CD8-positive, alpha-beta T cell (primary cell): ENCODE measurements at regions of chr5 and their contacts with region 1.

Region 1: GRCh38 chr5:32514806-32515205 is 70.3 kb upstream of the ZFR start:
- DNase-seq: no peak
- ATAC-seq: no peak
- H3K4me3 ChIP-seq: no peak overlapping the region
- H3K4me3 Mint-ChIP-seq: no peak overlapping the region
- H3K27ac ChIP-seq: no peak overlapping the region
- H3K27ac Mint-ChIP-seq: no peak overlapping the region
- H3K4me1 ChIP-seq: no peaks in the 10 kb centered on the region
- H3K4me1 Mint-ChIP-seq: no peaks in the 10 kb centered on the region
- H3K27me3 ChIP-seq: no peaks in the 10 kb centered on the region
- H3K27me3 Mint-ChIP-seq: peaks cover 4% of the 10 kb centered on the region
- CTCF ChIP-seq: no peak

Region 2: GRCh38 chr5:32551865-32552264 is 37.1 kb after region 1 on chr5:
- CTCF ChIA-PET with region 1: no interaction called
- POLR2A ChIA-PET with region 1: no interaction called
- intact Hi-C with region 1: loop called in 1 of 2 experiments (anchors 2 kb)
- DNase-seq: no peak
- ATAC-seq: no peak
- H3K4me3 ChIP-seq: no peak overlapping the region
- H3K4me3 Mint-ChIP-seq: no peak overlapping the region
- H3K27ac ChIP-seq: no peak overlapping the region
- H3K27ac Mint-ChIP-seq: no peak overlapping the region
- H3K4me1 ChIP-seq: no peaks in the 10 kb centered on the region
- H3K4me1 Mint-ChIP-seq: peaks cover 8% of the 10 kb centered on the region
- H3K27me3 ChIP-seq: no peaks in the 10 kb centered on the region
- H3K27me3 Mint-ChIP-seq: no peaks in the 10 kb centered on the region
- CTCF ChIP-seq: no peak

Region 3: GRCh38 chr5:32709781-32710549 is 195.2 kb after region 1 on chr5:
- CTCF ChIA-PET with region 1: no interaction called
- POLR2A ChIA-PET with region 1: no interaction called
- intact Hi-C with region 1: no loop called
- DNase-seq: peak in 5 of 9 experiments; percentile 8 to 46 (median 33)
- ATAC-seq: no peak
- H3K4me3 ChIP-seq: peak overlapping the region; percentile 39 to 52
- H3K4me3 Mint-ChIP-seq: peak overlapping the region; percentile 64
- H3K27ac ChIP-seq: no peak overlapping the region
- H3K27ac Mint-ChIP-seq: no peak overlapping the region
- H3K4me1 ChIP-seq: peaks cover 3% of the 10 kb centered on the region
- H3K4me1 Mint-ChIP-seq: peaks cover 27% of the 10 kb centered on the region
- H3K27me3 ChIP-seq: peaks cover 4 to 9% of the 10 kb centered on the region in 2 experiments
- H3K27me3 Mint-ChIP-seq: peaks cover 50% of the 10 kb centered on the region
- CTCF ChIP-seq: no peak